ENCODE measurements at regions of chr1 and their contacts with region 1.

Region 1: DNA sequence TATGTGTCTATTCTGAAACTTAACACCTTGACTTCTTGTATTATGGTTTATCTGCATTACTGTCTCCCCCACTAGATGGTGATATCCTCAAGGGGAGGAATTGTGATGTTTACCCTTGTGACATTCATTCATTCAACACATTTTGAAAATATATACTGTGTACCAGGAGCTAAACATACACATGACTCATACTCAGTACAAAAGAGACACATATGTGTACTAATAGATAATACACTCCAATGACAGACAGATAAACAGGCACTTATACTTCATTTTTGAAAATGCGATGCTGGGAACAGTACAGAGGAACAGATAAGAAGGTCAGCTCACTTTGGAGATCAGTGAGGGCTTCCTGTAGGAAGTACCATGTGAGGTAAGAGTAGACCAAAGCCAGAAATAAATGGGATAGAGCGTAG is 8.9 kb upstream of the RAB3GAP2 start:
- DNase-seq: no peak
- H3K4me3 ChIP-seq: no peak overlapping the region
- CTCF ChIP-seq: peak; percentile 44

Region 2: GRCh38 chr1:220294846-220295301 is 13.7 kb after region 1 on chr1:
- CTCF ChIA-PET with region 1: interaction called, 45 read pairs
- POLR2A ChIA-PET with region 1: no interaction called
- DNase-seq: no peak
- H3K4me3 ChIP-seq: no peak overlapping the region
- CTCF ChIP-seq: no peak

Measured in AG04449 (cell line).